Thyroid gland (tissue), 4 donors: ENCODE measurements at regions of chr12 and their contacts with region 1.

Region 1: GRCh38 chr12:94532490-94533422 is 73.1 kb upstream of the CEP83 start:
- DNase-seq: peak; percentile 67 to 75
- H3K4me3 ChIP-seq: no peak overlapping the region
- H3K27ac ChIP-seq: no peak overlapping the region
- H3K4me1 ChIP-seq: peaks cover 0 to 12% of the 10 kb centered on the region in 2 donors
- H3K27me3 ChIP-seq: no peaks in the 10 kb centered on the region
- CTCF ChIP-seq: peak; percentile 24 to 90 (median 75)
- POLR2A ChIP-seq: no peak

Region 2: GRCh38 chr12:94139816-94140215 is 392.9 kb before region 1 on chr12:
- intact Hi-C with region 1: loop called (anchors 5 kb)
- DNase-seq: no peak
- H3K4me3 ChIP-seq: no peak overlapping the region
- H3K27ac ChIP-seq: no peak overlapping the region
- H3K4me1 ChIP-seq: no peaks in the 10 kb centered on the region
- H3K27me3 ChIP-seq: no peaks in the 10 kb centered on the region
- CTCF ChIP-seq: no peak
- POLR2A ChIP-seq: no peak

Region 3: DNA sequence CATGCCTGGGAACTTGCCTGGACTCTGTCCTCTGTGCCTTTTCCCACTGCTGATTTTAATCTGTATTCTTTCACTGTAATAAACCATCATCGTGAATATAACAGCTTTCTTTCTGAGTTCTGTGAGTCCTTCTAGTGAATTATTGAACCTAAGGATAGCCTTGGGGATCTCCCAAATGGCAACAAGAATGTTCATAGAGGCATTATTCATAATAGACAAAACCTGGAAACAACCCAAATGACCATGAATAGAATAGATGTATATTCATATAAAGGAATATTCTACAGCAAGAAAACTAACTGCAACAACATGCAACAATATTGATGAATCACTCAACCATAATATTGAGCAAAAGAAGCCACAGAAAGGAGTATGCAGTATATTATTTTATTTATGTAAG is 28.4 kb before region 1 on chr12:
- intact Hi-C with region 1: no loop called
- DNase-seq: no peak
- H3K4me3 ChIP-seq: no peak overlapping the region
- H3K27ac ChIP-seq: no peak overlapping the region
- H3K4me1 ChIP-seq: no peaks in the 10 kb centered on the region
- H3K27me3 ChIP-seq: no peaks in the 10 kb centered on the region
- CTCF ChIP-seq: no peak
- POLR2A ChIP-seq: no peak

Region 4: DNA sequence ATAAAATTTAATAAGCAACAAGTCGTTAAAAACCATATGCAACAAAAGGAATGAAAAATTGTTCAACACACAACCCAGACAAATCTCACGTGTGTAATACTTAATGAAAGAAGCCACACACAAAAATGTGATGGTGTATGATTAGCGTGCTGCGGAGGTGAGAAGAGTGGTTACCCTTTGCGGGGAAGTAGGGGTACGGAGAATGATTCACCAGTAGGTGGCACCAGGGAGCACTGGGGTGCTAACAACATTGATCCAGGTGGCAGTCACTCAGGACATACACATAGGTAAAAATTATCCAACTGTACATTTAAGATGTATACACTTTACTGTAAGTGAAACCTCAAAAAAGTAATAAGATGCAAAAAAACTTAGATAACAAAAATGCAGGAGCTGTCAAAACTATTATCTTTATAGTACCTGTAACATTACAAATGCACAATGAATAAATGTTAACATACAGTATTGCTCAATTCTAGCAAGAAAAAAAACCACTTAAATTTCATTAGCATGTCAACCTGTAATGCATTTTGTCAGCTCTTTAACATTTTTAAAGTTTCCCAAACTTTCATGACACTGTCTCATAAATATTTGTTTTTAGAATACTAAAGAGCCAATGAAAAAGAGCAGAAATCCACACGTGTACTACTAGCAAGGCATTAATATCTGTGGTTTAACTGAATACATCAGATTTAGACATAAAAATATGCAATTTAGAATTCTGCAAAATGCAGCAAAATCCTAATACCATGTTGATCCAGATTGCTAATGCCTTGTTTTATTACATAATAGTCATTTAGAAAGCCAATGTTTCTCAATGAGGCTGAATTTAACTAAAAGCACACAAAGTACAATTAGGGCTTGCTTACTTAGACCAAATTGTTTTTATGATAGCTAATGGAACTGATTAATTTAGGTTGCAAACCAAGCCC is 70.9 kb after region 1 on chr12:
- intact Hi-C with region 1: no loop called
- DNase-seq: no peak
- H3K4me3 ChIP-seq: no peak overlapping the region
- H3K27ac ChIP-seq: no peak overlapping the region
- H3K4me1 ChIP-seq: peaks cover 0 to 5% of the 10 kb centered on the region in 2 donors
- H3K27me3 ChIP-seq: no peaks in the 10 kb centered on the region
- CTCF ChIP-seq: peak in 1 of 6 experiments; percentile 27
- POLR2A ChIP-seq: no peak

Region 5: GRCh38 chr12:94762259-94762942 is 229.6 kb after region 1 on chr12:
- intact Hi-C with region 1: no loop called
- DNase-seq: no peak
- H3K4me3 ChIP-seq: no peak overlapping the region
- H3K27ac ChIP-seq: peak overlapping the region; percentile 50 to 90 (median 63)
- H3K4me1 ChIP-seq: peaks cover 0 to 14% of the 10 kb centered on the region in 2 donors
- H3K27me3 ChIP-seq: no peaks in the 10 kb centered on the region
- CTCF ChIP-seq: no peak
- POLR2A ChIP-seq: no peak